ENCODE measurements at regions of chr10 and their contacts with region 1.

Region 1: GRCh38 chr10:118423800-118424479 is 81.8 kb upstream of the FAM204A start:
- DNase-seq: peak; percentile 90
- H3K4me3 Mint-ChIP-seq: no peak overlapping the region
- H3K27ac Mint-ChIP-seq: no peak overlapping the region
- H3K4me1 Mint-ChIP-seq: peaks cover 5% of the 10 kb centered on the region
- H3K27me3 Mint-ChIP-seq: peaks cover 4% of the 10 kb centered on the region
- CTCF ChIP-seq: peak; percentile 88

Region 2: GRCh38 chr10:118341791-118342637 is 81.9 kb before region 1 on chr10 and contains the start of gene FAM204A:
- CTCF ChIA-PET with region 1: interaction called, 4 read pairs
- POLR2A ChIA-PET with region 1: no interaction called
- intact Hi-C with region 1: loop called (anchors 2 kb)
- DNase-seq: peak; percentile 95
- H3K4me3 Mint-ChIP-seq: peak within 1 kb of the TSS; percentile 93
- H3K27ac Mint-ChIP-seq: peak within 1 kb of the TSS; percentile 98
- H3K4me1 Mint-ChIP-seq: peaks cover 21% of the 10 kb centered on the region
- H3K27me3 Mint-ChIP-seq: no peaks in the 10 kb centered on the region
- CTCF ChIP-seq: no peak
- total RNA-seq, gene FAM204A: 101 and 103 TPM in 2 replicates

Region 3: GRCh38 chr10:118373786-118374185 is 50.2 kb before region 1 on chr10:
- CTCF ChIA-PET with region 1: no interaction called
- POLR2A ChIA-PET with region 1: no interaction called
- intact Hi-C with region 1: no loop called
- DNase-seq: peak; percentile 30
- H3K4me3 Mint-ChIP-seq: no peak overlapping the region
- H3K27ac Mint-ChIP-seq: no peak overlapping the region
- H3K4me1 Mint-ChIP-seq: peaks cover 31% of the 10 kb centered on the region
- H3K27me3 Mint-ChIP-seq: no peaks in the 10 kb centered on the region
- CTCF ChIP-seq: no peak

Region 4: GRCh38 chr10:118405928-118406327 is 18.0 kb before region 1 on chr10:
- CTCF ChIA-PET with region 1: no interaction called
- POLR2A ChIA-PET with region 1: no interaction called
- intact Hi-C with region 1: no loop called
- DNase-seq: peak; percentile 14
- H3K4me3 Mint-ChIP-seq: no peak overlapping the region
- H3K27ac Mint-ChIP-seq: no peak overlapping the region
- H3K4me1 Mint-ChIP-seq: peaks cover 11% of the 10 kb centered on the region
- H3K27me3 Mint-ChIP-seq: peaks cover 22% of the 10 kb centered on the region
- CTCF ChIP-seq: no peak

Region 5: DNA sequence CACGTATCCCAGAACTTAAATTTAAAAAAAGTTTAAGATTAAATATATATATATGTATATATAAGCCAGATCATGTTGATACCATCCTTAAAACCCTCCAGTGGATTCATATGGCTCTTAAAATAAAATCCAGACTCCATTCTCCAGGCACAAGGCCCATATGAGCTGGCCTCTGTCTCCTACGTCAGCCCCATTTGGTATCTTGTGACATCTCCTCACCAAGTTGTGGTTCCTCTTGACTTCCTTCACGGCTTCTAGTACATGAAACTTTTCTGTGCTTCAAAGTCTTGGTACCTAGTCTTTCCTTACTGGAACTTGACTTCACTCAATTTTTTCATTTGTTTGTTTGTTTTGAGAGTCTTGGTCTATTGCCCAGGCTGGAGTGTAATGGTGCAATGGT is 110.2 kb after region 1 on chr10:
- CTCF ChIA-PET with region 1: no interaction called
- POLR2A ChIA-PET with region 1: no interaction called
- intact Hi-C with region 1: no loop called
- DNase-seq: no peak
- H3K4me3 Mint-ChIP-seq: no peak overlapping the region
- H3K27ac Mint-ChIP-seq: no peak overlapping the region
- H3K4me1 Mint-ChIP-seq: no peaks in the 10 kb centered on the region
- H3K27me3 Mint-ChIP-seq: no peaks in the 10 kb centered on the region
- CTCF ChIP-seq: no peak

Measured in MCF 10A (cell line).